Right ventricle myocardium superior (tissue), 1 donor: ENCODE measurements at regions of chr6 and their contacts with region 1.

Region 1: DNA sequence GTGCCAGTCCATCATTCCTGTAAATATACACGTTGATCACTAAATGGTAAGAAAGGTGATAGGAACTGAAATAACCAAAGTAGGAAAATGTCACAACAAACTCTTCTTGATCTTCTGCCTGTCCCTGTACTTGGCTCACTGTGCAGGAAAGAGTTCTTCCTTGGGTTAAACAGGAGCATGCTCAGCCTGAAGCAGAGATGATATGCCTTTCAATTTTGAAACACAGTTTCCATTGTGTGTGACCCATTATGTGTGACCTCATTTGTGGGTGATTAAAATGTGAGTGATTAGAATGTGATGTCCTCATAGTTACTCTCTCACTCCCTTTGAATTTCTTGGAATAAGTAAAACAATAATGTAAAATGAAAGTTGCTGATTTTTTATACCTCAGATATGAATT is 427.2 kb upstream of the AGPAT4 start:
- DNase-seq: no peak
- ATAC-seq: no peak

Region 2: DNA sequence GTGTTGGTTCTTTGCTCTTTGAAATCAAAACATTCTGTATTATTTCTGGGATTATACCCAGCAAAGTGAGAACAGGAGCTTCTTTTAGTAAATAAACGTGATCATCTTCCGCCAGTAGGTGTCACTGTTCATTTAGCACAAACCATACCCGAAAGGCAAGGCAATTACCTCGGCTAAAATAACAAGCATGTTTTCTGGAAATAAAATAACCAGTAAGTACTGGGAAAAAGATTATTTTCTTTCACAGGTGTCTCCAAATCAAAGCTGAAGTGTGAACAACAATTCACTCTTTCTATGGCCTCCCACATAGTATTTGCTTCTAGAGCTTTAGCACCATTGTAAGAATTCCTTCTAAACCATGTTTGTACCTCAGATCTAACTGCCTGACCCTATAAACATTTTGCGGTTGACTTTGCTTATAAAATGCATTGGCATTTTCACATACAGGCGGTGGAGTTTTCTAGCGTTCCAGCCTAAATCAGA is 282.6 kb before region 1 on chr6:
- intact Hi-C with region 1: loop called (anchors 10 kb)
- DNase-seq: no peak
- ATAC-seq: peak; percentile 71

Region 3: GRCh38 chr6:161748535-161749416 is 47.7 kb after region 1 on chr6:
- intact Hi-C with region 1: no loop called
- DNase-seq: peak; percentile 55
- ATAC-seq: peak; percentile 34

Region 4: DNA sequence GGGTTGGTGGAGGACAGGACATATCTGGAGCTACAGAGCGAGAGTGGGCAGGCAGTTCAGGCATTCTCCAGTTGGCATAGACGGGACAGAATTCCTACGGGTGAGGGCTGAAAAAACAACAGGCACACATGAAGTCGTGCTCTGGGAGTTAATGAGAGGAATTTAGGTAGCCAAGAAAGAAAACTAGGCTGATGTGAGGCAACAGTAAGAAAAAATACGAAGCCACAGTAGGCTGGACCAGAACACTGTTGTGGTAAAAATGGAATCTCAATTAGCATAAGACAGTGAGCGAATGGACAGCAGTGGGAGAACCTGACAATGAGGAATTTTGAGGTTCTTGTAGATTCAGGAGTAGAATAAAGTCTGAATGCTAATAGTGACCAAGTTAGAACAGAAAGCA is 60.9 kb after region 1 on chr6:
- intact Hi-C with region 1: no loop called
- DNase-seq: no peak
- ATAC-seq: no peak

Region 5: GRCh38 chr6:162251257-162251656 is 550.2 kb after region 1 on chr6:
- intact Hi-C with region 1: no loop called
- DNase-seq: no peak
- ATAC-seq: no peak

Region 6: GRCh38 chr6:162306616-162307015 is 605.6 kb after region 1 on chr6:
- intact Hi-C with region 1: no loop called
- DNase-seq: no peak
- ATAC-seq: no peak